ENCODE measurements at regions of chr14 and their contacts with region 1.

Region 1: GRCh38 chr14:77314043-77314442 is 6.6 kb downstream of the POMT2 start:
- DNase-seq: no peak
- H3K4me3 Mint-ChIP-seq: no peak overlapping the region
- H3K27ac Mint-ChIP-seq: no peak overlapping the region
- H3K4me1 Mint-ChIP-seq: no peaks in the 10 kb centered on the region
- H3K27me3 Mint-ChIP-seq: no peaks in the 10 kb centered on the region

Region 2: DNA sequence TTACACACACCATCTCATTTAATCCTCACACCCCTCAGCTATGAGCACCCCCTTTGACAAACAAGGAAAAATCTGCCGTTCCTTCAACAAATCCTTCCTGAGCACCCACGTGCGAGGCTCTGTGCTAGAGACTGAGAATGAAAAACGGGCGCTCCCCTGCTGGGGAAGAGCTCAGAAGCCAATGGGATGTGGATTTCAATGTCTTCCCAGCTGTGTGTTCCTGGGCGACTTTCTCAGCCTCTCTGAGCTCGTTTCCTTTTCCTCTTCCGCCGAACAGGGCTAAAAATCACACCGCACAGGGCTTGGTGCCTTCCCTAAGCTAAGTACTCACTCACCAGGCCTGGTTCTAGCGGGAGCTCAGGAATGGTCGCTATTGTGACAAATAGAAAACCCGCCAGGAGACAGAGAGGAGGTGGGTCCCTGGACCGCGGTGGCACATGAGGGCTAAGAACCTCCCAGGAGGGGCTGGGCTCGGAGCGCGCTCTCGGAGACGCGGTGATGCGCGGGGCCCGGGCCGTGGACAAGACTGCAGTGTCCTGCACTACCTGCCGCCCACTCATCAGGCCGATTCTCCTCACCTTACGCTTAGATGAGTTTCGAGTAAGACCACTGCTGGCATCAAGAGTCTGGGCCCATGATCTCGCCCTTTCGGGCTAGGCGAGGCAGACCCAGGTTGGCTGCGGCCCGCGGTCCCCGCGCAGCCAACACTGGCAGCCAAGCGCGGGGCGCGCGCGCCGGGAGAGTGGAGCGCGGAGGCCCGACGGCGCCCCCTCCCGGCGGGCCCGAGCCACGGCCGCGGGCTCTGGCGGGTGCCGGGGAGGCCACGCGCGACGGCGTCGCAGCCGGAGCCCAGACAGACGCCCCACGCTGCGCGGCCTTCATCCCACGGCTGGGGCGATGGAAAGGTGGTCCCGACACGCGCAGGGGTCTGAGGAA is 189.4 kb before region 1 on chr14:
- CTCF ChIA-PET with region 1: interaction called, 10 read pairs
- intact Hi-C with region 1: no loop called
- DNase-seq: peak; percentile 69
- H3K4me3 Mint-ChIP-seq: peak overlapping the region; percentile 77
- H3K27ac Mint-ChIP-seq: peak overlapping the region; percentile 42
- H3K4me1 Mint-ChIP-seq: peaks cover 36% of the 10 kb centered on the region
- H3K27me3 Mint-ChIP-seq: peaks cover 16% of the 10 kb centered on the region

Region 3: DNA sequence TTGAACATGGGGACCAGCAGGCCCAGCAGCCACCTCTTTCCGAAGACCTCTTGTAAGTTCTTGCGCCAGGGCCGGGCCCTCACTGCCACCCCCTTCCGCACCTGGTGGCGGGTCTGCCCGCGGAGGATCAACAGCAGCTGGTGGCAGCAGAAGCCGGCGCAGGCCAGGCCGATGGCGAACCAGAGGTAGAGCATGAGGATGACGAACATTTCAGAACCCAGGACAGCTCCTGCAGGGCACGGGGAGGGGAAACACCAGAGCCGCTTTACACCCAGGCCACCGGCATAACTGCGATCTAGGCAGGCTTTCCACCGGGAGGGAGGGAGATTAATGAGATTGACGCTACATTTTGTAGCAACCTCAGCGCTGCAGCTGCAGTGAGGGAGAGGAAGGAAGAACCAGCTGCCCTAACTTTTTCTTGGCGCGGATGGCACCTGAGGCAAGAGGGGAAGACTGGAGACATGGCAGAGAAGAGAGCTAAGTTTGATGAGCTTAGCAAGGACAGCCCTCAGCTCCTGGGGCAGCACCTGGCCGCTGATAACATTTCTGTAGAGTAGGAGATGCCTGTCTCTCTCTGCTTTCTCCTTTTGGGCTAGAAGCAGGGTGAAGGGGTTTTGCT is 180.2 kb before region 1 on chr14:
- CTCF ChIA-PET with region 1: interaction called, 11 read pairs
- intact Hi-C with region 1: loop called (anchors 1 kb)
- DNase-seq: peak; percentile 85
- H3K4me3 Mint-ChIP-seq: no peak overlapping the region
- H3K27ac Mint-ChIP-seq: no peak overlapping the region
- H3K4me1 Mint-ChIP-seq: no peaks in the 10 kb centered on the region
- H3K27me3 Mint-ChIP-seq: peaks cover 57% of the 10 kb centered on the region

Region 4: DNA sequence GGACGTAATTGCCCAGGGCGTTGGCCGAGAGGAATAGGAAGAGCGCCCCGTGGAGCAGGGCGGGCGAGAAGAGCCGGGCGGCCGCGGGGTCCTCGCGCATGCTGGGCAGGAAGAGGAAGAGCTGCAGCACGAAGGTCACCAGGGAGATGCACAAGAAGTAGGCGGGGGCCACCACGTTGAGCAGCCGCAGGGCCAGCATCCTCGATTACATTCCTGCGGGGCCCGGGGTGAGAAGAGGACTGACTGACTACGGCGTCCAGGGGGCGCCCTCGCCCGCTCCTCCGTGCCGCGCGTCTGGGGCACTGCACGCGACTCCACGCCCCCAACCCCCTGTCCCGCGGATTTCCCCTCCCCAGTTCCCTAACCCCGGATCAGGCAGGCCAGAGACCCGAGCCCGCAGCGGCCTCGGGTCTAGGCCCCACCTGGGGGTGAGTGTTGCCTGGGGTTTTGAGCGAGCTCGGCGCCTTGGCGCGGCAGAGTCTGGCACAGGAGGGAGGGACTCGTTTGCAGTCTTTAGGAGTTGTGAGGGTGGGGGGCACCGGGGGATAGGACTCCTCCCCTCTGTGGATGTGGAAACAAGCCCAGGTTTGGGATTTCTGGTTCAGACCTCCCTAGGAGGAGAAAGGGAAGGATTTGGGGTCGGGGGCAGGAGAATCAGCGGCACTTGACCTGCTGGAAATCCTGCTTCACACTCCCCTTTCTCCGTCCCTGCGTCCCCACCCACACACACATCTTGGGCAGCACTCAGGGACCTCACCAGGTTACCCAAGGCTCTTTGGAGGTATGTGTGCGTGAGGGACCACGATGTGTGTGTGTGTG is 174.3 kb before region 1 on chr14:
- CTCF ChIA-PET with region 1: interaction called, 11 read pairs
- intact Hi-C with region 1: loop called (anchors 1 kb)
- DNase-seq: peak; percentile 60
- H3K4me3 Mint-ChIP-seq: no peak overlapping the region
- H3K27ac Mint-ChIP-seq: no peak overlapping the region
- H3K4me1 Mint-ChIP-seq: peaks cover 20% of the 10 kb centered on the region
- H3K27me3 Mint-ChIP-seq: peaks cover 68% of the 10 kb centered on the region

Region 5: GRCh38 chr14:77145975-77146740 is 167.9 kb before region 1 on chr14:
- CTCF ChIA-PET with region 1: interaction called, 119 read pairs
- intact Hi-C with region 1: no loop called
- DNase-seq: no peak
- H3K4me3 Mint-ChIP-seq: no peak overlapping the region
- H3K27ac Mint-ChIP-seq: no peak overlapping the region
- H3K4me1 Mint-ChIP-seq: peaks cover 4% of the 10 kb centered on the region
- H3K27me3 Mint-ChIP-seq: peaks cover 55% of the 10 kb centered on the region

Region 6: GRCh38 chr14:77151918-77152588 is 162.0 kb before region 1 on chr14:
- CTCF ChIA-PET with region 1: interaction called, 119 read pairs
- intact Hi-C with region 1: loop called (anchors 1 kb)
- DNase-seq: no peak
- H3K4me3 Mint-ChIP-seq: no peak overlapping the region
- H3K27ac Mint-ChIP-seq: no peak overlapping the region
- H3K4me1 Mint-ChIP-seq: no peaks in the 10 kb centered on the region
- H3K27me3 Mint-ChIP-seq: peaks cover 25% of the 10 kb centered on the region

Region 7: GRCh38 chr14:77326167-77326566 is 12.1 kb after region 1 on chr14:
- CTCF ChIA-PET with region 1: interaction called, 13 read pairs
- intact Hi-C with region 1: no loop called
- DNase-seq: no peak
- H3K4me3 Mint-ChIP-seq: no peak overlapping the region
- H3K27ac Mint-ChIP-seq: no peak overlapping the region
- H3K4me1 Mint-ChIP-seq: peaks cover 10% of the 10 kb centered on the region
- H3K27me3 Mint-ChIP-seq: no peaks in the 10 kb centered on the region

Region 8: DNA sequence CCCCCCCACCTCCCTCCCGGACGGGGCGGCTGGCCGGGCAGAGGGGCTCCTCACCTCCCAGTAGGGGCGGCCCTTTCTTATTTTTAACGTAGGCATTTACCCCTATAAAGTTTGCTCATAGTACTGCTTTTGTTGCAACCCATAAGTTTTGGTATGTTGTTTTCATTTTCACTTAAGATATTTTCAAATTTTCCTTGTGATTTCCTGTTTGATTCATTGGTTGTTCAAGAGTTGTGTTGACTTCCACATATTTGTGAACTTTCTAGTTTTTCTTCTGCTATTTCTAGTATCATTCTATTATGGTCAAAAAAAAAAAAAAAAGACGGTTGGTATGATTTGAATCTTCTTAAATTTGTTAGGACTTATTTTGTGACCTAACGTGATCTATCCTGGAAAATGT is 102.8 kb after region 1 on chr14:
- CTCF ChIA-PET with region 1: no interaction called
- intact Hi-C with region 1: no loop called
- DNase-seq: no peak
- H3K4me3 Mint-ChIP-seq: no peak overlapping the region
- H3K27ac Mint-ChIP-seq: no peak overlapping the region
- H3K4me1 Mint-ChIP-seq: no peaks in the 10 kb centered on the region
- H3K27me3 Mint-ChIP-seq: no peaks in the 10 kb centered on the region

Measured in activated naive CD4-positive, alpha-beta T cell treated with anti-CD3 and anti-CD28 coated beads for 36 hours (primary cell).